Activated naive CD4-positive, alpha-beta T cell treated with anti-CD3 and anti-CD28 coated beads, Interleukin-2, amount 10 ng/mL, durations not matched to agents 7 days and 5 days (primary cell): ENCODE measurements at regions of chr15 and their contacts with region 1.

Region 1: DNA sequence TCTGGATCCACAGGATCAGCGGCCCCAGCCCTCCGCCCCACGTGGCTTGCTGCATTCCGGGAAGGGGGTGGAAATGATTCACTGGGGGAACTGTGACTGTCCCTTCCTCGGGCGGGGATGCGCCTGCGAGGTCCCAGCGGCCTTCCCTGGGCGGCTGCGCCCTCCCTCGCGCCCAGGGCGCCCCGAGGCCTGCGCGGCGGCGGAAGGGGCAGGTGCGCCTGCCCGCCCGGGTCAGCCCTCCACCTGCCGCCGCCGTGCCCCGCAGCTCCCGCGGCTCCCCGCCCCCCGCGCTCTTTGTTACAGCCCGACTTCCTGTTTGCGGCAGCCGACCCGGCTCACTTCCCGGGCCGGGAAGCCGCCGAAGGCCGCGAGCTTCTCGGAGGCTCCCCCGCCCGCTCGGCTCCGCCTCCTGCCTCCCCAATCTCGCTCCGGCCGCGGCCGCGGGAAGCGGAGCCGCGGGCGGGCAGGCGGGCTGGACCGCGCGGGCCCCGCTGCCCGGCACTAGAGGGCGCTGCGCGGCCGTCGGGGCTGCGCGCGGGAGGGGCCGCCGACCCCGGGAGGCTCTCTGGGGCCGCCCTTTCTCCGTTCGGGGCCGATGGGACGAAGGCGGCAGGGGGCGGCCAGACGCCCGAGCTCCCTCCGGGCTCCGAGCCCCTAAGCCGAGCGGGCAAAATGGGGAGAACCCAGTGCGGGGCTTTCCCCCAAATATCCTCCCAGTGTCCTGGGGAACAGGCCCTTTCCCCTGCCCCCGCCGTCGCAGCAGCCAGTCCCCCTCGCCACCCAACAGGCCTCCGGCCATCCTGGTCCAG is 11.5 kb upstream of the CHAC1 start:
- DNase-seq: peak; percentile 85
- H3K4me3 Mint-ChIP-seq: peak overlapping the region; percentile 73
- H3K27ac Mint-ChIP-seq: no peak overlapping the region
- H3K4me1 Mint-ChIP-seq: peaks cover 52% of the 10 kb centered on the region
- H3K27me3 Mint-ChIP-seq: peaks cover 31% of the 10 kb centered on the region

Region 2: GRCh38 chr15:40928821-40929659 is 12.7 kb before region 1 on chr15 and contains the start of gene DLL4:
- CTCF ChIA-PET with region 1: interaction called, 28 read pairs
- DNase-seq: peak; percentile 66
- H3K4me3 Mint-ChIP-seq: peak within 1 kb of the TSS; percentile 61
- H3K27ac Mint-ChIP-seq: no peak within 1 kb of the TSS
- H3K4me1 Mint-ChIP-seq: peaks cover 50% of the 10 kb centered on the region
- H3K27me3 Mint-ChIP-seq: peaks cover 98% of the 10 kb centered on the region

Region 3: GRCh38 chr15:40952901-40953712 is 11.4 kb after region 1 on chr15 and contains the start of gene CHAC1:
- CTCF ChIA-PET with region 1: interaction called, 43 read pairs
- DNase-seq: peak; percentile 98
- H3K4me3 Mint-ChIP-seq: peak within 1 kb of the TSS; percentile 94
- H3K27ac Mint-ChIP-seq: peak within 1 kb of the TSS; percentile 93
- H3K4me1 Mint-ChIP-seq: peaks cover 43% of the 10 kb centered on the region
- H3K27me3 Mint-ChIP-seq: peaks cover 17% of the 10 kb centered on the region

Region 4: DNA sequence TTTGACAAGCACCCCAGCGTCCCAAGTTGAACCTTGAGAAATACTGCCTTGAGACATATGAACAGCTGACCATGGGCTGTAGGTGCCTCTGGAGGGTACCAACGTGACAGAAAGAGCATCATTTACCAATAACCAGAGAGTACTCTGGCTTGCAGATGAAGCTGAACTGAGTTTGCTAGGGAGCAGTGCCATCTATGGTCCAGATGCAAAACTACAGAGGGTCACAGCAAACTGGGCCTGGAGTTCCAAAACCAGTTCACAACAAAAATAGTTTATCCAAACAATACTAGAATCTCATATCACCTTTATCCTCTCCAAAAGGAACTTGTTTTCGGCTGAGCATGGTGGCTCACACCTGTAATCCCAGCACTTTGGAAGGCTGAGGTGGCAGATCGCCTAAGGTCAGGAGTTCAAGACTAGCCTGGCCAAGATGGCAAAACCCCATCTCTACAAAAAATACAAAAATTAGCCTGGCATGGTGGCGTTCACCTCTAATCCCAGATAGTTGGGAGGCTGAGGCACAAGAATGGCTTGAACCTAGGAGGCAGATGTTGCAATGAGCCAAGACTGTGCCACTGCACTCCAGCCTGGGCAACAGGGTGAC is 80.9 kb after region 1 on chr15:
- CTCF ChIA-PET with region 1: interaction called, 18 read pairs
- DNase-seq: peak; percentile 66
- H3K4me3 Mint-ChIP-seq: no peak overlapping the region
- H3K27ac Mint-ChIP-seq: no peak overlapping the region
- H3K4me1 Mint-ChIP-seq: peaks cover 6% of the 10 kb centered on the region
- H3K27me3 Mint-ChIP-seq: no peaks in the 10 kb centered on the region